CD8-positive, alpha-beta T cell (primary cell): ENCODE measurements at regions of chr9 and their contacts with region 1.

Region 1: DNA sequence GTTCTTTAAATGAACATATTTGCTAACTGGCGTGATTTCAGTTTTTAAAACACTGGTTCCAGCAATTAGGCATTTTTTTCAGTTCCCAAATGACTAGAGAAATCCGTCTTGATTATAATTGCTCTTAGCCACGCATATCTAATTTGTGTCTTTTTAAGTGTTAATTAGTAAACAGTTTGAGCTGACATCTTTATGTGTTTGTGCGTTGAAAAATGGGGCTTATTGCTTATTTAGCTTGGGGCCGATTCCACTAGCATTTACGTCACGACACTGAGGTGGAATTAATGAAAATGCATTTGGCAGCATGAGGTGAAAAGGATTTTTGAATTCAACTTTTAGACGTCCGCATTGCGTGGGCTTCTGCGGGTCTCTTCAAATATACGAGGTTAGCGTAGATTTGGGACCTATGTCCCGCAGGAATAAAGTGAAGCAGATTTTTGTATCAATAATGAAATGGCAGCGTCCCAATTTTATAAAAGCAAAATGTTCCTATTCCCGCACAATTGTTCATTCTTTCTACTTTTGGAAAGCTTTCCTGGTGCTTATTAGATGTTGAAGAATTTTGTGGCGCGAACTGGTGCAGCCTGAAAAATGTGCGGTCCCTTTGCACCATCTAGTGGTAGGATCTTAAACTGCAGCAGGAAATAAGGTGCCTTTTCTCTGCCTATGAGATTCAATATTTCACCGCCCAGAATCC is 122.7 kb upstream of the LMX1B start:
- DNase-seq: peak in 7 of 9 experiments; percentile 41 to 82 (median 68)
- ATAC-seq: peak; percentile 74
- H3K4me3 ChIP-seq: no peak overlapping the region
- H3K4me3 Mint-ChIP-seq: no peak overlapping the region
- H3K27ac ChIP-seq: no peak overlapping the region
- H3K27ac Mint-ChIP-seq: no peak overlapping the region
- H3K4me1 ChIP-seq: peaks cover 16% of the 10 kb centered on the region
- H3K4me1 Mint-ChIP-seq: peaks cover 16% of the 10 kb centered on the region
- H3K27me3 ChIP-seq: no peaks in the 10 kb centered on the region
- H3K27me3 Mint-ChIP-seq: no peaks in the 10 kb centered on the region
- CTCF ChIP-seq: peak; percentile 88

Region 2: DNA sequence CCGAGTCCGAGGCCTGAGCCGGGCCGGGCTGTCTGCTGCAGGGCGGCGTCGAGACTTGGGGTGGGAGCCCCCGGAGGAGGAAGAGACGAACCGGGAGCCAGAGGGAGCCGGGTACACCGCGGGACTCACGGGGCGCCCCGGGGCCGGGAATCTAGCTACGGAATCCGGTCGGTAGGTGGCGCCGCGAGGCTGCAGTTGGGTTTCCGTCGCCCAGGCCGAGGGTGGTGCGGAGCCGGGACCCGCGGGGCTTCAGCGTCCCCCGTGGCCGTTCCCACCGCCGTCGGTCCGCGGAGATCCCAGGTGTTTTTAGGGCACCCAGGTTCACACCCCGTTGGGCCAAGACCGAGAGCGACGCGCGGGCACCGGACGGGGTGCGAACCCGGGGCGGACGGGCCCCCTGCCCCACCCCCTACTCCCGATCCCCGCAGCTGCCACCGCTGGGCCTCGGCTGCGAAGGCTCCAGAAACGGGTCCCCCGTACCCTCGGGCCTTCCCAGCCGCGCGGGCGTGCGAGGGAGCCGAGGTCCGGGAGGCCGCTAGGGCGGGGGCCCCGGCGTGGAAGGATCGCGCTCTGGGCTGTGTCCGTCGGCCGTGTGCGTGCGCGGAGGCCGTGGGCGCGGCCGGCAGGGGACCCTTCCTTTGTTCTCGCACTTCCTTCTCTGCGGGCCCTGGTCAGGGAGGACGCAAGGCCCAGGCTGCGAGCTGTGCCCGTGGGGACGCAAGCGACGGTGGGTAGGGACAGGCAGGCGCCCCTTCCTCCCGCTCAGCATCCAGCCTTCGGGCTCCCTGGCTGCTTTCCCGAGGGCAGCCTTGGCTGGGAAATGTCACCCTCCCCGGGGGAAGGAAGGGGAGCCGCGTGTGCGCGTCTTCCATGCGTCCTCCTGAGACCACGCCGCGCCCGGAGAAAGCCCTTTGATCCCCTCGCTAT is 1082.8 kb before region 1 on chr9:
- CTCF ChIA-PET with region 1: interaction called, 18 read pairs
- POLR2A ChIA-PET with region 1: no interaction called
- intact Hi-C with region 1: loop called in 1 of 2 experiments (anchors 1 kb)
- DNase-seq: peak; percentile 60 to 86 (median 78)
- ATAC-seq: peak; percentile 82
- H3K4me3 ChIP-seq: peak overlapping the region; percentile 29 to 58
- H3K4me3 Mint-ChIP-seq: peak overlapping the region; percentile 70
- H3K27ac ChIP-seq: no peak overlapping the region
- H3K27ac Mint-ChIP-seq: no peak overlapping the region
- H3K4me1 ChIP-seq: peaks cover 6% of the 10 kb centered on the region
- H3K4me1 Mint-ChIP-seq: peaks cover 10% of the 10 kb centered on the region
- H3K27me3 ChIP-seq: peaks cover 8 to 20% of the 10 kb centered on the region in 2 experiments
- H3K27me3 Mint-ChIP-seq: peaks cover 27% of the 10 kb centered on the region
- CTCF ChIP-seq: peak; percentile 84

Region 3: DNA sequence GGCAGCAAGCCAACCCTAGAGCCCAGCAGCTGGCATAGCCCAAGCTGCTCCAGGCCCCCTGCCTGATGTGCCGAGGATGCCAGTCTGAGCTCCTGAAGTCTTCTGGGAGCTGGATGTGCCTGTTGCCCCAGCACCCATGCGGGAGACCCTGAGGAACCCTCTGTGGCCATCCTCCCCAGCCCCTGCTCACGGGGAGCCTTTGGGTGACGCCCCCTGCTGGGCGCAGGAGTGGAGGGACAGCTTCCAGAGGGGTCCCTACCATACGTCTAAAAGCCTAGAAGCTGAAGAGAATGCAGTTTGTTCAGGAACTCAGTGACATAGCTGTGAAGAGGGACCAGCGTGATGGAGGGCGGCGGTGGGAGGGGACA is 197.5 kb before region 1 on chr9:
- CTCF ChIA-PET with region 1: interaction called, 20 read pairs
- POLR2A ChIA-PET with region 1: no interaction called
- intact Hi-C with region 1: no loop called
- DNase-seq: peak in 1 of 9 experiments; percentile 43
- ATAC-seq: no peak
- H3K4me3 ChIP-seq: no peak overlapping the region
- H3K4me3 Mint-ChIP-seq: no peak overlapping the region
- H3K27ac ChIP-seq: no peak overlapping the region
- H3K27ac Mint-ChIP-seq: no peak overlapping the region
- H3K4me1 ChIP-seq: no peaks in the 10 kb centered on the region
- H3K4me1 Mint-ChIP-seq: no peaks in the 10 kb centered on the region
- H3K27me3 ChIP-seq: no peaks in the 10 kb centered on the region
- H3K27me3 Mint-ChIP-seq: peaks cover 12% of the 10 kb centered on the region
- CTCF ChIP-seq: no peak

Region 4: GRCh38 chr9:126326228-126327005 is 164.6 kb before region 1 on chr9 and contains the start of gene MVB12B:
- CTCF ChIA-PET with region 1: interaction called, 179 read pairs
- POLR2A ChIA-PET with region 1: interaction called, 3 read pairs
- intact Hi-C with region 1: no loop called
- DNase-seq: peak; percentile 29 to 82 (median 53)
- ATAC-seq: peak; percentile 76
- H3K4me3 ChIP-seq: peak within 1 kb of the TSS; percentile 56 to 61
- H3K4me3 Mint-ChIP-seq: peak within 1 kb of the TSS; percentile 88
- H3K27ac ChIP-seq: peak within 1 kb of the TSS; percentile 46 to 74
- H3K27ac Mint-ChIP-seq: peak within 1 kb of the TSS; percentile 97
- H3K4me1 ChIP-seq: peaks cover 46% of the 10 kb centered on the region
- H3K4me1 Mint-ChIP-seq: peaks cover 46% of the 10 kb centered on the region
- H3K27me3 ChIP-seq: no peaks in the 10 kb centered on the region
- H3K27me3 Mint-ChIP-seq: no peaks in the 10 kb centered on the region
- CTCF ChIP-seq: no peak
- total RNA-seq, gene MVB12B: 25.7 to 26.9 TPM

Region 5: DNA sequence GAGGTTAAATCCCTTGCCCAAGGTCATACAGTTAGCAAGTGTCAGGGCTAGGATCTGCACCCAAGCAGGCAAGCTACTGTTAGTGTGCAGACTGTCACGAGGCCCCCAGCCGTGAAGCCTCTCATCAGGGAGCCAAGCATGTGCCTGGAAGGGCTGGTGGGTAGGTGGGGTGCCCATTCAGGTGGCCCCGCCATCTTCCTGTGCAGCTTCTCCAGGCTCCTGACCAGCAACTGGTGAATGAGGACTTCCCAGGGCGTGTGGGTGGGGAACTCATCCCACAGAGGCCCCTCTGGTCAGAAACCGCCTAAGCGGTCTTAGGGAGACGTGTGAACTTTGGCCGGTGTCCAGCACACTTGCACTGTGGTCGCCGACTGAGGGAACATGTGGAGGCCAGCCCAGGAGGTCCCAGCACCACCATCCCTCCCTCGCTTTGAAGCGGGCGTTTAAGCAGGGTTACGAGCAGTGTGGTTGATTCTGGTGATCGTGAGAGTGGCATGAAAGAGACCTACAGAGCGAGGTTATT is 86.6 kb before region 1 on chr9:
- CTCF ChIA-PET with region 1: interaction called, 101 read pairs
- POLR2A ChIA-PET with region 1: interaction called, 3 read pairs
- intact Hi-C with region 1: no loop called
- DNase-seq: no peak
- ATAC-seq: no peak
- H3K4me3 ChIP-seq: no peak overlapping the region
- H3K4me3 Mint-ChIP-seq: no peak overlapping the region
- H3K27ac ChIP-seq: no peak overlapping the region
- H3K27ac Mint-ChIP-seq: no peak overlapping the region
- H3K4me1 ChIP-seq: peaks cover 22% of the 10 kb centered on the region
- H3K4me1 Mint-ChIP-seq: peaks cover 24% of the 10 kb centered on the region
- H3K27me3 ChIP-seq: no peaks in the 10 kb centered on the region
- H3K27me3 Mint-ChIP-seq: no peaks in the 10 kb centered on the region
- CTCF ChIP-seq: no peak

Region 6: GRCh38 chr9:126449725-126450667 is 41.0 kb before region 1 on chr9:
- CTCF ChIA-PET with region 1: interaction called, 15 read pairs
- POLR2A ChIA-PET with region 1: no interaction called
- intact Hi-C with region 1: no loop called
- DNase-seq: no peak
- ATAC-seq: no peak
- H3K4me3 ChIP-seq: no peak overlapping the region
- H3K4me3 Mint-ChIP-seq: no peak overlapping the region
- H3K27ac ChIP-seq: no peak overlapping the region
- H3K27ac Mint-ChIP-seq: no peak overlapping the region
- H3K4me1 ChIP-seq: no peaks in the 10 kb centered on the region
- H3K4me1 Mint-ChIP-seq: peaks cover 29% of the 10 kb centered on the region
- H3K27me3 ChIP-seq: no peaks in the 10 kb centered on the region
- H3K27me3 Mint-ChIP-seq: no peaks in the 10 kb centered on the region
- CTCF ChIP-seq: no peak

Region 7: DNA sequence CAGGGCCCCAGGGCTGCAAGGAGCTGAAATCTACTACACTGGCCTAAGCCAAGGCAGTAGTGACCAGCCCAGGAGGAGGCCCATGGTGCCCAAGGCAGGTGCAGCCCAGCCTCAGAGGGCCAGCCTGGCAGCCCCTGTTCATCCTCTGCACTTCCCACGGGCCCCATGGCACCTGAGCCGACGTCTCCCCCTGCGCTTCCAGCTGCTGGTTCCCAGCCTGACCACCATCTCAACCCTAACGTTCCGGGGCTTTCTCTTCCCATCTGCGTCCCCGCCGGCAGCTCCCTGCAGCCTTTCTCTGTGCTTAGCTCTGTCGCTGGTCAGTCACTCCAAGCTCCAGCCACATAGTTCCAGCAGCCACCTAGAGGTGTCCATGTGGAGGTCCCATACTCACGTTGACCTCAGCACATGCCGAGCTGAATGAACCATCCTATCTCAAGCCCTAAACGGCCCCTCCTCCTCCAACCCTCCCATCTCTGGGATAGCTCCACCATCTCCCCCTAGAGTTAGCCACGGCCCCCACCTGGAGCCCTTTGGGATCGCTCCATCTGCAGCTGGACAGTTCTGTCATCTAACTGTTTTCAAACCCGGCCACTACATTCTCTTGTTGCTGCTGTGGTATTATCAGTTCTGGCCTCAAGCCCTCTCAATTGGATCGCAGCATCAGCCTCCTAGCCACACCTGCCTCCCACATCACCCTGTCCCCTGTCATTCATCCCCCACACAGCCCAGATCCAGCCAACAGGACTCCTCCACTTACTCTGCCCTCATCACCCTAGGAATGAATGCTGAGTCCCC is 17.3 kb after region 1 on chr9:
- CTCF ChIA-PET with region 1: interaction called, 150 read pairs
- POLR2A ChIA-PET with region 1: no interaction called
- intact Hi-C with region 1: no loop called
- DNase-seq: no peak
- ATAC-seq: no peak
- H3K4me3 ChIP-seq: no peak overlapping the region
- H3K4me3 Mint-ChIP-seq: no peak overlapping the region
- H3K27ac ChIP-seq: no peak overlapping the region
- H3K27ac Mint-ChIP-seq: no peak overlapping the region
- H3K4me1 ChIP-seq: no peaks in the 10 kb centered on the region
- H3K4me1 Mint-ChIP-seq: no peaks in the 10 kb centered on the region
- H3K27me3 ChIP-seq: peaks cover 0 to 3% of the 10 kb centered on the region in 2 experiments
- H3K27me3 Mint-ChIP-seq: peaks cover 20% of the 10 kb centered on the region
- CTCF ChIP-seq: no peak

Region 8: GRCh38 chr9:127035951-127036350 is 544.9 kb after region 1 on chr9:
- CTCF ChIA-PET with region 1: no interaction called
- POLR2A ChIA-PET with region 1: no interaction called
- intact Hi-C with region 1: no loop called
- DNase-seq: no peak
- ATAC-seq: no peak
- H3K4me3 ChIP-seq: no peak overlapping the region
- H3K4me3 Mint-ChIP-seq: no peak overlapping the region
- H3K27ac ChIP-seq: no peak overlapping the region
- H3K27ac Mint-ChIP-seq: no peak overlapping the region
- H3K4me1 ChIP-seq: no peaks in the 10 kb centered on the region
- H3K4me1 Mint-ChIP-seq: no peaks in the 10 kb centered on the region
- H3K27me3 ChIP-seq: no peaks in the 10 kb centered on the region
- H3K27me3 Mint-ChIP-seq: no peaks in the 10 kb centered on the region
- CTCF ChIP-seq: no peak